GM18951 (cell line): ENCODE measurements at regions of chr14 and their contacts with region 1.

Region 1: GRCh38 chr14:77067632-77068514 is 30.2 kb upstream of the CIPC start:
- POLR2A ChIP-seq: no peak

Region 2: GRCh38 chr14:76710056-76711010 is 357.5 kb before region 1 on chr14:
- in situ Hi-C with region 1: loop called (anchors 25 kb)
- POLR2A ChIP-seq: no peak

Region 3: GRCh38 chr14:76867516-76868453 is 200.1 kb before region 1 on chr14:
- in situ Hi-C with region 1: loop called (anchors 5 kb)
- POLR2A ChIP-seq: no peak

Region 4: DNA sequence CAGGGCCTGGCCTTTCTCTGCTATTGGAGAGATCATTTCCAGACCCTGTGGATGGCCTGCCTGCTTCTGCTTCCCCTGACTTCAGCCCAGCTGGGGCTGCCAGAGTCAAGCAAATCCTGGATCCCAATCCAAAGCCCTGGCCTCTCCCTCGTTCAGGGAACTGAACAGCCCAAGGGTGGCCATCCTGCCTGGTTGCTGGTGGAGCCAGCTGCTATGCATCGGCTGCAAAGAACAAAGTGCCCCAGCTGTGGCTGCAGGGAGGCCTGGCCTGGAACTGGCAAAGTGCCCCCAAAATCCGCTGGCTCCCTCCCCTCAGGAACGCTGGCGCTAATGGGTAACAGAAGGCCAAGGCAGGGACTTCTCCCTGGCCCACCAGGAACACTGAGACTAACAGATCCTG is 185.2 kb before region 1 on chr14:
- in situ Hi-C with region 1: no loop called
- POLR2A ChIP-seq: no peak

Region 5: DNA sequence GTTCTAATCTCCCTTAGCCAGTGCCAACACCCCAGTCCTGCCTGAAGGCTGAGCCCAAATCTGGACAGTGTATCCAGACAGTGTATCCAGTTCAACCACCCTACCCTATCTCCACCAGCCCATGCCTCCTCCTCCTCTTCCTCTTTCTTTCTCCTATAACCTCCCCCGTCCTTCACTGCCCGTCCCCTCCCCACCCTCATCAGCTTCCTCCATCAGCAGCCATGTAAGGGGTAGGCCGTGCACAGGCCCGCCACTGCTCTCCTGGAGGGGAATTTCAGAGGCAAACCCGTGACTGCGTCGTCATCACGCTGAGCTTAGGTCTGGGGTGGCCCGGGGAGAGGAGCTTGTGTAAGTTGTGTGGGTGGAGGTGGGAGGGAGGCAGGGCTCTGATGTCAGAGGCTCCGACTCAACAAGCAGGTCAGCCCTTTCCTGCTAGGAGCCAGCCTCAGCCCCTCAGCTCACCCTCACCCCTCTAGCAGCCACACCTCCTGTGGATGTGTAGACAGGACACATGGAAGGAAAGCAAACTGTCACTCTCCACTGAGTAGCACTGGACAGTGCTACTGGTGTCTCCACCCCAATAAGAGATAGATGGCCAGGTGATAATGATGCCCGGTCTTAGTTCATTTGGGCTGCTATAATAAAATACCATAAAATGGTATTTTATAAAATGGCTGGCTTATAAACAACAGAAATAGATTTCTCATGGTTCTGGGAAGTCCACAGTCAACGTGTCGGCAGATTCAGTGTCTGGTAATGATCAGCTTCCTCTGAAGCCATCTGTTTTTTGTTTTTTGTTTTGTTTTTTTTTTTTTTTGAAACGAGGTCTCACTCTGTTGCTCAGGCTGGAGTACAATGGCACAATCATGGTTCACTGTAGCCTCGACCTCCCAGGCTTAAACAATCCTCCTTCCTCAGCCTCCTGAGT is 89.8 kb before region 1 on chr14:
- in situ Hi-C with region 1: no loop called
- POLR2A ChIP-seq: peak; percentile 39